IMR-90 (cell line): ENCODE measurements at regions of chr9 and their contacts with region 1.

Region 1: GRCh38 chr9:109604788-109605187 is 106.7 kb upstream of the PTPN3 start:
- DNase-seq: no peak
- ATAC-seq: no peak
- H3K4me3 ChIP-seq: no peak overlapping the region
- H3K27ac ChIP-seq: no peak overlapping the region
- H3K4me1 ChIP-seq: 0 out of 2 replicates have a peak, but pooled peaks cover 4% of the 10 kb centered on the region
- H3K27me3 ChIP-seq: peaks cover 30% of the 10 kb centered on the region
- CTCF ChIP-seq: no peak
- POLR2A ChIP-seq: no peak
- RAD21 ChIP-seq: no peak

Region 2: DNA sequence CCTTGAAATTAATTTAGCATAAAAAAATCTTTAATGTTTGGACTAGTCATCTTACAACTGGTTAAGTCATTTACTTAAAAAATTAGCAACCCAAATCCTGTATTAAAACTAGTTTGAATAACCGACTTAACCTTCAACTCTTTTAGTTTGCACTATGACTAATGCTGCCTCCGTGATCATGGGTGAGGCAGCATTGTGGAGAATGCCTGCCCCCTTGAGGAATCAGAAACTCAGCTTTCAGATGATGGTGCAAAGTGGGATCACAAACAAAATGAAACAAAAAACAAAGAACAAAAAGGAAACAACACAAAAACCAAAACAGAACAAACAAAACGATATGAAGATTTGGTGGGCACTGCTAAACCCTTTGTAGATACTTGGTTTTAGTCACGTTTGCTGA is 48.2 kb after region 1 on chr9:
- CTCF ChIA-PET with region 1: no interaction called
- POLR2A ChIA-PET with region 1: no interaction called
- dilution Hi-C with region 1: no loop called
- in situ Hi-C with region 1: no loop called
- intact Hi-C with region 1: loop called (anchors 5 kb)
- DNase-seq: peak; percentile 16
- ATAC-seq: 0 out of 2 replicates have a peak, but pooled peaks have one; percentile 32
- H3K4me3 ChIP-seq: no peak overlapping the region
- H3K27ac ChIP-seq: no peak overlapping the region
- H3K4me1 ChIP-seq: no peaks in the 10 kb centered on the region
- H3K27me3 ChIP-seq: peaks cover 20% of the 10 kb centered on the region
- CTCF ChIP-seq: peak; percentile 38
- POLR2A ChIP-seq: no peak
- RAD21 ChIP-seq: peak; percentile 32; the same call in 1 of the 2 replicates

Region 3: DNA sequence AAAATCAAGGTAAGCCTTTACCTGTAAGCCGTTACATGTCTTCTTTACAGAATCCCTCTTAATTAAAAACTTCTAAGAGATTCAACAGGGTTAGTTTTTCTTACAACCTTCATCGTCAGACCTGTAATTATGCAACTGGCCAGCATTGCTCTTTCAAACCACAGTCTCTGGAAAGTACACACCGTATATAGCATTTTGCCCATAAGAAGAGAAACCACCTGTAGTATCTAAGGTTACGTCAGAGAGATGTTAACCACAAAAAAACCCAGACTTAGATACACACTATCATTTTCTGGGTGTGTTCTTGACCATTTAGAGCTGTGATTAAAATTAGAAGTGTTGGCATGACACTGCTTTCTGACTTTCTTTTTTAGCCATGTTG is 1203.8 kb after region 1 on chr9:
- CTCF ChIA-PET with region 1: no interaction called
- POLR2A ChIA-PET with region 1: no interaction called
- dilution Hi-C with region 1: no loop called
- in situ Hi-C with region 1: no loop called
- intact Hi-C with region 1: no loop called
- DNase-seq: no peak
- ATAC-seq: no peak
- H3K4me3 ChIP-seq: no peak overlapping the region
- H3K27ac ChIP-seq: no peak overlapping the region
- H3K4me1 ChIP-seq: no peaks in the 10 kb centered on the region
- H3K27me3 ChIP-seq: no peaks in the 10 kb centered on the region
- CTCF ChIP-seq: no peak
- POLR2A ChIP-seq: no peak
- RAD21 ChIP-seq: no peak